ENCODE measurements at regions of chr7 and their contacts with region 1.

Region 1: GRCh38 chr7:107563775-107564552 is at the starts of genes COG5 and DUS4L:
- DNase-seq: peak; percentile 93
- total RNA-seq, gene COG5: 43.9 TPM
- total RNA-seq, gene DUS4L: 7.9 TPM

Region 2: DNA sequence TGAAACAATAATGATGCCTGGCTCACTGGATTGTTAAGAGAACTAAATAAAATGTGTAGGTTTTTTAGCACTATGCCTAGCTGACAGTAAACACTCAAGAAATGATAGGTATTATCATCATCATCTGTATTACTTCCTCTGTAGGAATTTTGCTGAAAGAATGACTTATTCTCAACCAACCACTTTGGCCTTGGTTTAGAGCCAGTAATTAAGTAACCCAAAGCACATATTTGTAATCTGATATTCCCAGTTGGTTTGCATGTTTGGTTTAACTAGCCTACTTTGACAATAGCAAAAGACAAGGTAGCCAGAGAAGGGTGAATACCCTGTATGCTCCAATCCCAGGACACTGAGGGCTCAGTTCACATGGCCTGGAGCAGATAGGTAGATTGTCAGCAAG is 50.5 kb after region 1 on chr7:
- intact Hi-C with region 1: loop called (anchors 10 kb)
- DNase-seq: no peak